ENCODE measurements at regions of chr2 and their contacts with region 1.

Region 1: GRCh38 chr2:121400201-121400600 is 115.2 kb upstream of the TFCP2L1 start:
- DNase-seq: no peak

Region 2: DNA sequence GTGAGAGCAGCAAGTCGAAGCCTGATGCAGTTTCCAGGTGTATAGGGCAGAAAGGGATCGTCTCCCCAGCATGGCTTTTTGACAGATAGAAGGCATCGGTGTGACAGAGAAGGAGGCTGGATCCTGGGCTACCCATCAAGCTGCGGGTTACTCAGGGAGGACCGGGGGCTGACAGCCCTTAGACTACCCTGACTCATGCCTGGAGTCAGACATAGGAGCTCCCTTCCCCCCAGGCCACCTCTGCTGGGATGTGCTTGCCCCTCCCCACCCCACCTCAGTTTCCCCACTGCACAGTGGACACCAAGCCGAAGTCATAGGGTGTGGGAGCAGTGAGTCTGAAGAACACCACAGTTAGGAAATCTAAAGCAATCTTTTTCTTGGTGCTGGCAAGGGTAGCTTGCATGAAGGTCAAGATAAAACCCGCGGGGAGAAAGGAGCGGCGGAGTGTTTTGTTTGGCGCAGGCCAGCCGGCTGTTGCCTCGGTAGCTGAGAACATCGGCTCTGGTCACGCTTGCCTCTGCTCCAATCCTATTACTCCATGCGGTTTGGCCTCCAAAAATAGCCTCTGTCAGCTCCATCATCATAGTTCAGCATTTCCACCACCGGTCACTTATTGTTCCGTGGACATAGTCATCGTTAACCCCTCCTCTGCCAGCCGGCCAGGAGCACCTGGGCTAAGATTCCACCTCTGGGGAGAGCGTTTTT is 833.7 kb before region 1 on chr2:
- intact Hi-C with region 1: no loop called
- DNase-seq: peak; percentile 96

Region 3: GRCh38 chr2:121231385-121232000 is 168.7 kb before region 1 on chr2:
- intact Hi-C with region 1: no loop called
- DNase-seq: peak; percentile 77

Region 4: GRCh38 chr2:121429119-121429903 is 29.1 kb after region 1 on chr2:
- intact Hi-C with region 1: loop called in 1 of 2 experiments (anchors 1 kb)
- DNase-seq: no peak

Region 5: GRCh38 chr2:121722479-121722878 is 322.3 kb after region 1 on chr2:
- intact Hi-C with region 1: loop called (anchors 2 to 5 kb)
- DNase-seq: no peak